ENCODE measurements at regions of chr2 and their contacts with region 1.

Region 1: DNA sequence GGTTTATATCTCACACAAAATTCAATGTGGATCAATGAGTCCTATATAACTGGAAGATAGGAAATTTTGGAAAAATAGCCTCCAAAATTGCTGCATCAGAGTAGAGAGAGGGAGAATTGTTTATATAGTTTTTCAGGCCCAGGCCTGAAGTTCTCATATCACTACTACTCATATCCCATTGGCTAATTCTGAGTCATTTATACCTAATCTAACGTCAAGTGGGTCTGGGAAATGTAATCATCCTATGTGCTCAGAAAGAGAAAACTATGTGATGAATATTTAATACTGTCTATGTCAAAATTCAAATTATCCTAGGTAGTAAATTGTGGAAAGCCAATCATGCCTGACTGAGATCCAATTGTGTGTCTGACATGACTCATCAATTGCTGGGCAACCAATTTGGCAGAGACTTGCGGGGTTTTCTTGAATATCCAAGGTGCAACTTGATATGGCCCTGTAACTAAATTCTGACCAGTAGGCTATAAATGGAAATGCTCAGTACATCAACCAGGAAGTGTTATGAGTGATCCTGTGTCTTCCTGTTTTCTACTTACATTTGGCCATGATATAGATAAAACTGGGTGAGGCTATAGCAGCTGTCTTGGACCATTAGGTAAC is 744.4 kb downstream of the KCNJ3 start:
- DNase-seq: no peak
- ATAC-seq: no peak
- H3K4me3 ChIP-seq: no peak overlapping the region
- H3K4me3 Mint-ChIP-seq: no peak overlapping the region
- H3K27ac ChIP-seq: no peak overlapping the region
- H3K27ac Mint-ChIP-seq: no peak overlapping the region
- H3K4me1 ChIP-seq: no peaks in the 10 kb centered on the region
- H3K4me1 Mint-ChIP-seq: no peaks in the 10 kb centered on the region
- H3K27me3 ChIP-seq: no peaks in the 10 kb centered on the region
- H3K27me3 Mint-ChIP-seq: no peaks in the 10 kb centered on the region
- CTCF ChIP-seq: no peak

Region 2: GRCh38 chr2:155310589-155310988 is 132.3 kb before region 1 on chr2:
- intact Hi-C with region 1: no loop called
- DNase-seq: no peak
- ATAC-seq: no peak
- H3K4me3 ChIP-seq: no peak overlapping the region
- H3K4me3 Mint-ChIP-seq: no peak overlapping the region
- H3K27ac ChIP-seq: no peak overlapping the region
- H3K27ac Mint-ChIP-seq: no peak overlapping the region
- H3K4me1 ChIP-seq: no peaks in the 10 kb centered on the region
- H3K4me1 Mint-ChIP-seq: no peaks in the 10 kb centered on the region
- H3K27me3 ChIP-seq: no peaks in the 10 kb centered on the region
- H3K27me3 Mint-ChIP-seq: no peaks in the 10 kb centered on the region
- CTCF ChIP-seq: no peak

Region 3: GRCh38 chr2:155481141-155481540 is 38.3 kb after region 1 on chr2:
- intact Hi-C with region 1: loop called (anchors 2 kb)
- DNase-seq: no peak
- ATAC-seq: no peak
- H3K4me3 ChIP-seq: no peak overlapping the region
- H3K4me3 Mint-ChIP-seq: no peak overlapping the region
- H3K27ac ChIP-seq: no peak overlapping the region
- H3K27ac Mint-ChIP-seq: no peak overlapping the region
- H3K4me1 ChIP-seq: no peaks in the 10 kb centered on the region
- H3K4me1 Mint-ChIP-seq: no peaks in the 10 kb centered on the region
- H3K27me3 ChIP-seq: no peaks in the 10 kb centered on the region
- H3K27me3 Mint-ChIP-seq: no peaks in the 10 kb centered on the region
- CTCF ChIP-seq: no peak

Region 4: DNA sequence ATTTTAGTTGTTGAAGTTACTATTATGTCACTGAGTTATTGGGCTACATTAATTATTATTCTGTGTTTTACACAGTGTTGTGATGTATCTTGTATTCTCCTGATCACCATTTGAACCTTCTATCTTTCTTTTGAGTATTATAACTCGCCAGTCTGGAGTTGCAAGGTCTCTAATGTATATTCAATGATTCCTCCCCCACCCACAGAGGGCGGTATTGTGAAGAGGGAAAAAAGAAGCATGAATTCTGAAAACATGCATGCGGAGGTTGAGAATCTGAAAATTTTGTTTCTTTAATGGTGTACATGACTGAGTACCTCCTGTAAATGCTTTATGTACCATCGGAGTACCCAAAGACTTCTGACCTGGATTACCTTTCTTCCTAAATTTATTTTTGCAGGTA is 623.0 kb after region 1 on chr2:
- intact Hi-C with region 1: no loop called
- DNase-seq: peak in 1 of 2 donors; percentile 4
- ATAC-seq: no peak
- H3K4me3 ChIP-seq: no peak overlapping the region
- H3K4me3 Mint-ChIP-seq: no peak overlapping the region
- H3K27ac ChIP-seq: no peak overlapping the region
- H3K27ac Mint-ChIP-seq: no peak overlapping the region
- H3K4me1 ChIP-seq: no peaks in the 10 kb centered on the region
- H3K4me1 Mint-ChIP-seq: no peaks in the 10 kb centered on the region
- H3K27me3 ChIP-seq: no peaks in the 10 kb centered on the region
- H3K27me3 Mint-ChIP-seq: no peaks in the 10 kb centered on the region
- CTCF ChIP-seq: no peak

Measured in natural killer cell (primary cell).